IMR-90 (cell line): ENCODE measurements at regions of chr17 and their contacts with region 1.

Region 1: DNA sequence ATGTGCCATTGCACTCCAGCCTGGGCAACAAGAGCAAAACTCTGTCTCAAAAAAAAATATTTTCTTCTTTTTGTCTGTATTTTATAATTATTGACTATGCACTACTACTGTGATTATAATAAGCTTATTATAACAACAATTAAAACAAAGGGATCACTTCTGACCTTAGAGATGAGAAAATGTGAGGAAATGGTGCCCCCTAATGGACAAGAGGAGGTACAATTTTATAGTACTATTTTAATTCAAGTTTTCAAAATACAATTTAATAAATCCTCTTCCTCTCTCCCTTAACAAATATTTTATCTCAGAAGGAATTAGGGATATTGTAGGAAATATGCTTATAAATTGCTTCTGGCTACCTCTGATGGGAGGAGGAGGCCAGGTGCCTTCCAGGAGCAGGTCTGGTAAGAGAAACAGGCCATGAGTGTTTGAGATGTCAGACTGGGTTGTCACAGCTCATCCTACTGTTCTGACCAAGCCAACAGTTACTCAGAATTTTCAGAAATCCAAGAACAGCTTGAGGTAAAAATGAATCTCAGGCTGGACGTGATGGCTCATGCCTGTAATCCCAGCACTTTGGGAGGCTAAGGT is 14.0 kb downstream of the VPS53 start:
- DNase-seq: peak; percentile 53
- ATAC-seq: peak; percentile 57
- H3K4me3 ChIP-seq: no peak overlapping the region
- H3K27ac ChIP-seq: no peak overlapping the region
- H3K4me1 ChIP-seq: peaks cover 9% of the 10 kb centered on the region
- H3K27me3 ChIP-seq: no peaks in the 10 kb centered on the region
- CTCF ChIP-seq: peak; percentile 77
- POLR2A ChIP-seq: no peak
- RAD21 ChIP-seq: peak; percentile 82

Region 2: DNA sequence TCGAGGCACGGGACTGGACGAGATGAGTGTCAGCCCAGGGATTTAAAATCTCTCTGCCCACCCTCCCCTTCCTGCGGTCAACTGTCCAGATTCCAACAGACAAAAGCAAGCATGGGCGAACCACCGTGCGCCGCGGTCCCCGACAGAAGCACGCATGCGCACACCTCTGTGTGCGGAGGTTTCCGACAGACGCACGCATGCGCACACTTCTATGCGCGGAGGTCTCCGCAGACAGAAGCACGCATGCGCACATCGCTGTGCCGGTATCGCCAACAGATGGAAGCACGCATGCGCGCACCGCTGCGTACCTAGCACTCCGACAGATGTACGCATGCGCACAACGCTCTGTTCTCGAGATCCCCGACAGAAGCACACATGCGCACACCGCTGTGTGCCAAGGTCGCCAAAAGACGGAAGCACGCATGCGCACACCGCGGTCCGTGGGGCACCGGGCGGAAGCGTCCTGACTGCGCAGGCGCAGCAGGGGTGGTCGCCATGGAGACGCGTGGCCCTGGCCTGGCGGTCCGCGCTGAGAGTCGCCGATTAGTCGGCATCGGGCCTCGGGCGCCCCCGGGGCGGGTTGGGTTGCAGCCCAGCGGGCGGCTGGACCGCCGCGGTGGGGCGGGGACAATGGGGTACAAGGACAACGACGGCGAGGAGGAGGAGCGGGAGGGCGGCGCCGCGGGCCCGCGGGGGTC is 290.6 kb before region 1 on chr17:
- CTCF ChIA-PET with region 1: interaction called, 34 read pairs
- POLR2A ChIA-PET with region 1: interaction called, 3 read pairs
- dilution Hi-C with region 1: no loop called
- in situ Hi-C with region 1: no loop called
- intact Hi-C with region 1: loop called (anchors 1 kb)
- DNase-seq: peak; percentile 98
- ATAC-seq: peak; percentile 91
- H3K4me3 ChIP-seq: peak overlapping the region; percentile 44
- H3K27ac ChIP-seq: peak overlapping the region; percentile 48
- H3K4me1 ChIP-seq: peaks cover 4% of the 10 kb centered on the region
- H3K27me3 ChIP-seq: no peaks in the 10 kb centered on the region
- CTCF ChIP-seq: peak; percentile 9; the same call in 1 of the 2 replicates
- POLR2A ChIP-seq: peak; percentile 60
- RAD21 ChIP-seq: no peak

Region 3: DNA sequence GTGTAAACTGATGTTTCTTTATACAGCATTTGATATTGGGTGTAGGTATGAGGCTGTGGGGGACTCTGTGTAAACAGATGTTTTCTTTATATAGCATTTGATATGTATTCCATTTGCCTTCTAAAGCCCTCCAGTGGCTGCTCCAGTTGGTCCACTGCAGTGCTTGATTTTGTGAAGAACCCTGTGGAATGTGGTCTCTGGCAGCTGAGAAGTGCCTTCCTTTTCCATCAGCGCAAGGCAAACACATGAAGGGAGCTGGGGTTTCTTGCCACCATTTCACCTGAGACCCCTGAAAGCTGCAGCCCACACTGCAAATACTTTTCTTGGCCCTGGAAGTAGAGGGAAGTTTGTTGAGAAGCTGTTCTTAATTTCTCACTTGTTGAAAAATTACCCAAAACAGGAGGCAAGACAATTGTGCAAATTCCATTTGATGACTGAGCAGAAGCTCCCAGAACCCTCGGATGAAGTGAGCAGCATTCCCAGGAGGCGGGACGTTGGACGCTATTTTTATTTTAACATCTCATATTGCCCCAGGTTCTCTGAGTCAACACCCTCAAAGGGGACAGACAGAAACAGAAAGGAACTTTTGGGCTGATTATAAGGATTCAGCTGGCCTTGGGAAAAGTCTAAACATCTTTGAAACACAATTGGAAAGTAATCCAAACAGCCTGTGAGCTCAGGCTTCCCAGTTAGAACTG is 189.4 kb before region 1 on chr17:
- CTCF ChIA-PET with region 1: no interaction called
- POLR2A ChIA-PET with region 1: no interaction called
- dilution Hi-C with region 1: no loop called
- in situ Hi-C with region 1: no loop called
- intact Hi-C with region 1: loop called (anchors 5 kb)
- DNase-seq: peak; percentile 82
- ATAC-seq: peak; percentile 88
- H3K4me3 ChIP-seq: no peak overlapping the region
- H3K27ac ChIP-seq: no peak overlapping the region
- H3K4me1 ChIP-seq: peaks cover 11% of the 10 kb centered on the region
- H3K27me3 ChIP-seq: no peaks in the 10 kb centered on the region
- CTCF ChIP-seq: no peak
- POLR2A ChIP-seq: no peak
- RAD21 ChIP-seq: no peak

Region 4: GRCh38 chr17:596763-597644 is 103.6 kb before region 1 on chr17:
- CTCF ChIA-PET with region 1: no interaction called
- POLR2A ChIA-PET with region 1: no interaction called
- dilution Hi-C with region 1: no loop called
- in situ Hi-C with region 1: no loop called
- intact Hi-C with region 1: no loop called
- DNase-seq: peak; percentile 90
- ATAC-seq: peak; percentile 73
- H3K4me3 ChIP-seq: no peak overlapping the region
- H3K27ac ChIP-seq: peak overlapping the region; percentile 46
- H3K4me1 ChIP-seq: peaks cover 22% of the 10 kb centered on the region
- H3K27me3 ChIP-seq: no peaks in the 10 kb centered on the region
- CTCF ChIP-seq: no peak
- POLR2A ChIP-seq: no peak
- RAD21 ChIP-seq: no peak